Activated naive CD4-positive, alpha-beta T cell treated with anti-CD3 and anti-CD28 coated beads for 36 hours (primary cell): ENCODE measurements at regions of chr1 and their contacts with region 1.

Region 1: DNA sequence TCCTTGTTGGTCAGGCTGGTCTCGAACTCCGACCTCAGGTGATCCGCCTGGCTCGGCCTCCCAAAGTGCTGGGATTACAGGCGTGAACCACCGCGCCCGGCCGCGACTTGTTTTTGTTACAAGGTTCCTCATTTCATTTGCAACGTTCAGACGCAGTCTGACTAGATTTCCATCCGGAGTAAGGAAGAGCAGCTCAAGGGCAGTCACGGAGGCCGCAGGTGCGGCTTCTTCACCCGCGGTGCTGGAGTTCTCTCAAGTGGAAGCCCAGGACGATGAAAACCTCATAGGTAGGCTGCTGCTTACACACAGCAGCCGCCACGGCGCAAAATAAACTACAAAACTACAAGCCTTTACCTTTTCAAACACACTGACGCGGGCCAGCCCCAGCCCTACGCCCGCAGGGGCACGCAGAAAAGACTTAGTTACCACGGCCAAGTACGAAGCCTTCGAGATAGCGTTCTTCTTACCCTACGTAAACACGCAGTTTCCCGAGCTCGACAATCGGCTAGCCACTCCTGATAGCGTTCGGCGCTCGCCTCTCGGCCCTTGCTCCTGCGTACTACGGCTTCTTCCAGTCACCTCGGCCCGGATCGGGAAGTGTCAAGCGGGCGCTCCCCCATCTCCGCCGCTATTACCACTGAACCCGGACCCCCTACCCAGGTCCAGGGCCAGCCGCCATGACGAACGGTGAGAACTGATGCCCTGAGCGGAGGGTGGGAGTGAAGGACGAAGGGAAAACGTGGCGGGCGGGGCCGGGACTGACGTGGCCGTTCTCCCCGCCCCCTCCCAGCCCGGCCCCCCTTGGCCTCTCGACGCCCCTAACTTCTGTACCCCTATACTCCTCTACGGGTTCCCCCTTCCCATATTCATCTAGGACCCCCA is at the start of gene TMEM167B:
- DNase-seq: peak; percentile 95
- H3K4me3 Mint-ChIP-seq: peak within 1 kb of the TSS; percentile 82
- H3K27ac Mint-ChIP-seq: peak within 1 kb of the TSS; percentile 87
- H3K4me1 Mint-ChIP-seq: peaks cover 29% of the 10 kb centered on the region
- H3K27me3 Mint-ChIP-seq: no peaks in the 10 kb centered on the region
- total RNA-seq, gene TMEM167B: 35.0 to 37.6 TPM

Region 2: DNA sequence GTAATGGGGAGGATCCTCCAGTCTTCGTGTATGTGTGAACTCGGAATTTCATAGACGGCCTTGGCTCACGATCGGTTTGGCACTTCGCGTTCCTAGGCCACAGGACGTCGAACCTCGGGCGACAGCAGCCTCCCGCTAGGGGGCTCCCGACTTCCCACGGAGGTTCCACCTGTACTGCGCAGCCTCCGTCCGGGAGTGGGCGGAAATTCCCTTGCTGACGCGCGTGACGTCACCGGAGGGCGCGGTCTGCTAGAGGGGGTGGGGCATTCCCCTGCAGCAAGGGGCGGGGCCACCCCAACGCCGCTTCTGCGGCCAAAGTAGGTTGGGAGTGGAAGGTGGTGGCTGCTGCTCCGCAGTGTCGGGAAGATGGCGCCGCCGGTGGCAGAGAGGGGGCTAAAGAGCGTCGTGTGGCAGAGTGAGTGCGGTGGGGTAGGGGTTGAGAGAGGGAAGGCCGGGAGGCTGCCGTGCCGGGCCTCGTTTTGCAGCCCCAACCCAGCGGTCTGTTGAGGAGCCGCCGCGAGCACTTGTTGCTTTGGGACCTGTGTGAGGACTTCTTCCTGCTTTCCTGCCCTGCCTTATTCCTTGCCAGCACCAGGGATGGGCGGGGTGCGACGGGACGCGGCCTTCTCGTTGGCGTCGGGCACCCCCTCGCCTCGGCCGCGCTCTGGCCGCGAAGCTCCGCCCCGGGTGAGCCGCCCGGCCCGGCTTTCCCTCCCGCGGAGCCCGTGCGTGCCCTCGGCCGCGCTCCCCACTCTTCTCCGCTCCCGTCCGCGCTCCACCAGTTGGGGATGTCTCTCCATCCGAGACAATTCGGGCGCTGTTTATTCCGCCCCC is 343.8 kb before region 1 on chr1 and contains the start of gene STXBP3:
- CTCF ChIA-PET with region 1: no interaction called
- intact Hi-C with region 1: loop called (anchors 5 kb)
- DNase-seq: peak; percentile 100
- H3K4me3 Mint-ChIP-seq: peak within 1 kb of the TSS; percentile 94
- H3K27ac Mint-ChIP-seq: peak within 1 kb of the TSS; percentile 92
- H3K4me1 Mint-ChIP-seq: peaks cover 28% of the 10 kb centered on the region
- H3K27me3 Mint-ChIP-seq: no peaks in the 10 kb centered on the region
- total RNA-seq, gene STXBP3: 29.1 to 30.3 TPM

Region 3: GRCh38 chr1:109041621-109042468 is 48.6 kb before region 1 on chr1 and contains the start of gene WDR47:
- CTCF ChIA-PET with region 1: no interaction called
- intact Hi-C with region 1: loop called (anchors 1 kb)
- DNase-seq: peak; percentile 97
- H3K4me3 Mint-ChIP-seq: peak within 1 kb of the TSS; percentile 73
- H3K27ac Mint-ChIP-seq: peak within 1 kb of the TSS; percentile 6
- H3K4me1 Mint-ChIP-seq: peaks cover 12% of the 10 kb centered on the region
- H3K27me3 Mint-ChIP-seq: no peaks in the 10 kb centered on the region
- total RNA-seq, gene WDR47: 8.2 to 8.4 TPM

Region 4: GRCh38 chr1:109193653-109194590 is 103.5 kb after region 1 on chr1:
- CTCF ChIA-PET with region 1: interaction called, 3 read pairs
- intact Hi-C with region 1: loop called (anchors 1 kb)
- DNase-seq: peak; percentile 73
- H3K4me3 Mint-ChIP-seq: no peak overlapping the region
- H3K27ac Mint-ChIP-seq: no peak overlapping the region
- H3K4me1 Mint-ChIP-seq: peaks cover 4% of the 10 kb centered on the region
- H3K27me3 Mint-ChIP-seq: no peaks in the 10 kb centered on the region

Region 5: DNA sequence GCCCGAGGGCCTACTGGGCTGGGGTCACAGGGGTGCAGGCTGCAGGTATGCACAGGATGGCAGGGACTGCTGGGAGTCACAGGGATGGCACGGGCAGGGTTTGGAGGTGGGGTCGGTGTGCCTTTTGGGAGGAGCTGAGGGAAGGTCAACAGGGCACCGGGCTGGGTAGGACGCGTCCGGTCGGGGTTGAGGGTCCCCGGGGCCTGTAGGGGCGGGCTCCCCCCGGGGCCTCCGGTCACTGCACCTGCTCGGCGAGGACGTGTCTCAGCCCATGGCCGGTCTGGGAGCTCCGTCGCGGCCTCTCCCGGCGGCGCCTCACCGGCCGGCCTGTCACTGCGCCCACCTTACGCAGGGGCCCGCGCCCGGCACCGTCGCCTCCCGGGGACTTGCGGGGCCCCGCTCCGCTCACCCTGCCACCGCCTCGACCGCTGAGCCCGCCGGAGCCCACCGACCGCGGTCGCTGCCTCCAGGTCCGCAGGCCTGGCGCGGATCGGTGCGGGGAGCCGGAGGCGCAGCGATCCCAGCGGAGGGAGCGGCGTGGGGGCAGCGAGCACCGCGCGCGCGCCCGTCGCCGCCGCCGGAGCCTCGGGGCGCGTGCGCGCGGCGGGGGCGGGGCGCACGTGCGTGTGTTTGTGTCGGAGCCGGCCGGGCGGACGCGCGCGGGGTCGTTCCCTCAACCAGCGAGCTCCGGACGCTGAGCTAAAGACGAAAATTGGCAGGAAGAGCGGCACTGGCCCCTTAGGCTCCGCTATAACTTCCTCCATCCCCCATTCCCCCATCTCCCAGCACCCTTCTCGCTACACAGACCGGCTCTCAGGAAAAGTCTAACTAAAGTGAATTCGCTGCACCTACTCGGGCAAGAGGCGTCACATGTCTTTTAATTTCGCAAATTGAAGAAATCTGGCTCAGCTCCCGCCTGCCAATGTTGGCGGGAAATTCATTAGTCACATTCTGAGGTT is 419.0 kb after region 1 on chr1 and contains the start of gene AMIGO1:
- CTCF ChIA-PET with region 1: no interaction called
- intact Hi-C with region 1: loop called (anchors 5 kb)
- DNase-seq: peak; percentile 54
- H3K4me3 Mint-ChIP-seq: peak within 1 kb of the TSS; percentile 88
- H3K27ac Mint-ChIP-seq: peak within 1 kb of the TSS; percentile 73
- H3K4me1 Mint-ChIP-seq: peaks cover 59% of the 10 kb centered on the region
- H3K27me3 Mint-ChIP-seq: no peaks in the 10 kb centered on the region
- total RNA-seq, gene AMIGO1: 1.5 to 1.7 TPM